ENCODE measurements at regions of chr13 and their contacts with region 1.

Region 1: DNA sequence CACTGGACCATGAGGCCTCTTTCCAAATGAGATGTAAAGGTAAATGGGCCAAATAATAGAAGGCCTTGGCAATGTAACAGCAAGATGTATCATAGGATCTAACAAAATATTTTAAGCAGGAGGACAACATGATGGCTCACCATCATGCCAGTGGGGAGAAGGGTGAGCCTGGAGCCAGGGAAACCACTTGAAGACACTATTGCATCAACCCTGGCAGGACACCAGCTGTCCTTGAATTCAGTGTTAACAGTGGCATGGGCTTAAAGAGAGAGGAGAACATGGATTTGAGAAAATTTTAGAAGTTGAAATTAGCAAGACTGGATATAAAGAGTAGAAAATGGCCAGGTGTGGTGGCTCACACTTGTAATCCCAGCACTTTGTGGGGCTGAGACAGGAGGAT is 6.7 kb upstream of the RCBTB2 start:
- DNase-seq: no peak
- H3K4me3 ChIP-seq: no peak overlapping the region
- H3K27ac ChIP-seq: no peak overlapping the region
- H3K4me1 ChIP-seq: peaks cover 11 to 18% (median 14%) of the 10 kb centered on the region in 4 donors
- H3K27me3 ChIP-seq: no peaks in the 10 kb centered on the region
- CTCF ChIP-seq: no peak
- EP300 ChIP-seq: no peak
- POLR2A ChIP-seq: no peak

Region 2: DNA sequence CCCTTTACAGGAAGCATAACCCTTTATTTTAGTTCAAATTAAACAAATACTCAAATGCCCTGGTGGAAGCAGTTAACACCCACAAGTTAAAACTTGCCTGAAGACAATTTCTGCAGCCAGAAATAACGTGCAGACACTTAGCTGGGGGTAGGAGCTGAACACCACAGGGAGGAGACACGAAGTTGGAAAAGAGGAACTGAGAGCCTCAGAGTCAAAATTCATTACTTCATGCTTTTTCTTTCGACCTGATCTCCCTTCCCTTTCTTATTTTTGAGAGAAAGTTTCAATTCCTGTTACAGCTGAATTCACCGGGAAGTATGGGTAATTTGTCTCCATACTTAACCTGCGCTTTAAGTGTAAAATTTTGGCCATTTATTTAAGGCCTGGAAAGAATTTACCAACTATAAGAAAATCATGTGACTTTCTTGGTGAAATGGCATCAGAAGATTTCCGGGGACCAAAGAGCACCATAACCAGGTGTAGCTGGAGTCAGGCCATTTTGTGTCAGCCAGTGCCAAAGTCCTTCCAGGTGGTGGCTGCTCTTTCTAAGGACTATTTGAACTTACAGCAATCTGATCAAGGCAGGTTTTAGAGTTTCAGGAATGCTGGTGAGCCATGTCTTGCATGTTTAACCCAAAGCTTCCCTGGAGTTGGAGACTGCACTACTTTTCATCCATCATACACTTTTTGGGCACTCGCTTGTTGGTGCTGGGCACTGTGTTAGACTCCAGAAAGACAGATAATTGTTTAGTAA is 39.8 kb after region 1 on chr13:
- intact Hi-C with region 1: loop called (anchors 5 kb)
- DNase-seq: peak in 1 of 2 donors; percentile 72
- H3K4me3 ChIP-seq: no peak overlapping the region
- H3K27ac ChIP-seq: peak overlapping the region in 4 of 5 donors; percentile 30 to 74 (median 46)
- H3K4me1 ChIP-seq: peaks cover 13 to 39% (median 25%) of the 10 kb centered on the region in 4 donors
- H3K27me3 ChIP-seq: no peaks in the 10 kb centered on the region
- CTCF ChIP-seq: no peak
- EP300 ChIP-seq: no peak
- POLR2A ChIP-seq: no peak